ENCODE measurements at regions of chr1 and their contacts with region 1.

Region 1: DNA sequence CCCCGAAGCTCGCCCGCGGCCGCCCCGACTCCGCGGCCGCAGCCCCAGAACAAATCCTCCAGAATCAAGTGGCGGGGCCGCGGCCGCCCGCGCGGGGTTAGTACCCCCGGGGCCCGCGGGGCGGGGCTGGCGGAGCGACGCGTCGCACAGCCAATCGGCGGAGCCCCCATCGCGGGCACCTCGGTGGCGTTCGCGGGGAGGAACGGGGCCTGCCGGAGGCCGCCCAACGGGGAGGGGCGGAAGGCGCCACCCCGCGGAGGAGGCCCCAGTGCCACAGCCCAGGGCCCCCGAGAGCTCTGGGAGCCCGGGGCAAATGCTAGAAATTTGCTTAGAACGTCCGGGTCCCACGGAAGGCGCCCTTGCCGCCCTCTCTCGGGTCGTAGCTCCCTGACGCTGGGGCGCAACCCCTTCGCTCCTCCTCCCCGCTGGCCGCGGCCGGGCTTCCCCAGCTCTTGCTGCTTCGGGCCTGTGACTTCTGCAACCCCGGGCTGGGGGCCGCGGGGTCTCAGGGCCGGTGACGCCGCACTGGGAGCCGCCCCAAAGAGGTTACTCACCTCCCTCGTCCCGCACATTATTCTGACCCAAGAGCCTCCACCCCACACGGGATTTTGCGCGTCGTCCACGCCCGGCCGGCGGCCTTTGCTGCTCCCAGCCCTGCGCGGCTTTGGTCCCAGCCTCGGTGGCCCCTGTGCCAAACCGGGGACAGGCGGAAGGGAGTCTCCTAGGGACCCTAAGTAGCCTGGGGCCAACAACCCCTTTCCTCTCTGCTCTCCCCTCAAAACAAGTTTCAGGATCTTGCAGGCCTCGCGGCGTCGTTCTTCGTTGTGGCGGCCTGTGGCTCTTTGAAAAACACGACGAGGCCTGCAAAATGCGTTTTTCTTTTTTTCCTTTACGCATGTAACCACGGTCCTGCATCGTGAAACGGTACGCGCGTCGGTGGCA is at the start of gene RUNX3:
- DNase-seq: peak; percentile 62
- H3K4me3 Mint-ChIP-seq: peak within 1 kb of the TSS; percentile 41
- H3K27ac Mint-ChIP-seq: no peak within 1 kb of the TSS
- H3K4me1 Mint-ChIP-seq: no peaks in the 10 kb centered on the region
- H3K27me3 Mint-ChIP-seq: peaks cover 83% of the 10 kb centered on the region
- CTCF ChIP-seq: no peak
- total RNA-seq, gene RUNX3: 0.28 and 1.3 TPM in 2 replicates

Region 2: DNA sequence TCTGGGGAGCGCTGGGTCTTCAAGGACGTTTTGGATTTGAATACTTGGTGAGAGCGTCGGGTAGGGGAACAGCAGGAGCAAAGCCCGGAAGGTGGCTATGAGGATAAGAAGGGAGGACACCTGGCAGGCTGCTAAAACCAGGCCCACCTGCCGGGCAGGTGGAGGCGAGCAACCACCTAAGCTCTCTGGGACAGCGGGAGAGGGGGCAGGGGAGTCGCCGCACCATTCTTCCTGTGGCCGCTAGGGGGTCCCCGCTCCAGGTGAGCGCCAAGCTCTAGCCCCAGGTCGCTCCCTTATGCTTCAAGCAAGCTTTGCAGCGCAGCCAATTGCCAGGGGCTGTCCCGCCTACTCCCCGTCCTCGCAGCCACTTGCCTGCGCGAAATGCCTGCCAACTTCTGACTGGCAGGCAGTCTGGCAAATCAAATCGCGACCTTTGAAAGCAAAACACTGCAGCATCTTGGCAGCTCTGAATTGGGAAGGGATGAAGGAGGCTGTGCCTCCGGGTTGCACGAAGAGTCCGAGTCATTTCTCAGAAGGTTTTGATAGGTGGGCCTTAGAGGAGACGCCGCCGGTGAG is 515.1 kb before region 1 on chr1 and contains the start of gene NIPAL3:
- CTCF ChIA-PET with region 1: no interaction called
- intact Hi-C with region 1: no loop called
- DNase-seq: peak; percentile 96
- H3K4me3 Mint-ChIP-seq: peak within 1 kb of the TSS; percentile 98
- H3K27ac Mint-ChIP-seq: peak within 1 kb of the TSS; percentile 74
- H3K4me1 Mint-ChIP-seq: peaks cover 37% of the 10 kb centered on the region
- H3K27me3 Mint-ChIP-seq: no peaks in the 10 kb centered on the region
- CTCF ChIP-seq: peak; percentile 83
- total RNA-seq, gene NIPAL3: 28.8 and 30.8 TPM in 2 replicates

Region 3: GRCh38 chr1:24567792-24568388 is 362.6 kb before region 1 on chr1:
- CTCF ChIA-PET with region 1: no interaction called
- intact Hi-C with region 1: no loop called
- DNase-seq: peak; percentile 75
- H3K4me3 Mint-ChIP-seq: peak overlapping the region; percentile 24
- H3K27ac Mint-ChIP-seq: peak overlapping the region; percentile 74
- H3K4me1 Mint-ChIP-seq: peaks cover 56% of the 10 kb centered on the region
- H3K27me3 Mint-ChIP-seq: no peaks in the 10 kb centered on the region
- CTCF ChIP-seq: no peak

Region 4: GRCh38 chr1:24642481-24643361 is 287.8 kb before region 1 on chr1 and contains the start of gene SRRM1:
- CTCF ChIA-PET with region 1: no interaction called
- intact Hi-C with region 1: no loop called
- DNase-seq: peak; percentile 95
- H3K4me3 Mint-ChIP-seq: peak within 1 kb of the TSS; percentile 86
- H3K27ac Mint-ChIP-seq: peak within 1 kb of the TSS; percentile 96
- H3K4me1 Mint-ChIP-seq: peaks cover 31% of the 10 kb centered on the region
- H3K27me3 Mint-ChIP-seq: no peaks in the 10 kb centered on the region
- CTCF ChIP-seq: no peak
- total RNA-seq, gene SRRM1: 122 and 130 TPM in 2 replicates

Region 5: DNA sequence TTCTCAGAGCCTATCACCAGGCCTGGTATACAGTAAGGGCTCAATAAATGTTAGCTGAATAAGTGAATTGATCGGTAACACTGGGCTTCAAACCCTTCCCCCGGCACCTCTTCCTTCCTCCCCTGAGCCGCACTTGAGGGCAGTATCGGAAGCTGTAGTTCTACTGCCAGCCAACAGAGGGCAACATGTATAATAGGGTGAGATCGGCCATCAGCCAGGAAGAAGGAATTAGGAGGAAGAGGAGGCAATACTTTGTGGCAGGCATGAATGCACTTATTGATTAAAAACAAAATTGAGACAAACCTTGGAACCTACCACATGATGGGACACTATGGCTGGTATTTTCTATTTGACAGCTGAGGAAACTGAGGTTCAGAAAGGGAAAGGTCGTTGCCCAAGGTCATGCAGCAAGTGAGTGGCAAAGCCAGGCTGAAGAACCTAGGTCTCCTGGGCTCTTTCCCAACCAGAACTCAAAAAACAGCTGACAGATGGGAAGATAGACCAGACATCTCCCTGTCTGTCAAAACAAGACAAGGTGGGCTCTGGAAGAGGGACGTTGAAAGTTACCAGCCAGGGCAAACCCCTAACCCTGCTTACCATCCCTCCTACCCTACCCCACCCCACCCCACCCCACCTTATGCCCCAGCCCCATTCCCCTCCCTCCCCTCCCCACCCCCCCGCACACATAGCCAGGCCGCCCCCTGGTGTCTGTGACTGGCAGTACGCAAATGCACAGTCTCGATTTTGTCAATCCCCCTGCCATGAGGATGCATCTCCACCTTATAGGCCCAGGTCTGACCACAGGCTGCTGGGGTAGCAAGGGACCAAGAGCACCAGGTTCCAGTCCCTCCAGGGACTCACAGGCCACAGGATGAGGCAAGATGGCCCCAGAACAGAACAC is 106.9 kb after region 1 on chr1:
- CTCF ChIA-PET with region 1: interaction called, 3 read pairs
- intact Hi-C with region 1: loop called (anchors 5 kb)
- DNase-seq: peak; percentile 47
- H3K4me3 Mint-ChIP-seq: no peak overlapping the region
- H3K27ac Mint-ChIP-seq: no peak overlapping the region
- H3K4me1 Mint-ChIP-seq: peaks cover 8% of the 10 kb centered on the region
- H3K27me3 Mint-ChIP-seq: peaks cover 41% of the 10 kb centered on the region
- CTCF ChIP-seq: peak; percentile 36

Region 6: DNA sequence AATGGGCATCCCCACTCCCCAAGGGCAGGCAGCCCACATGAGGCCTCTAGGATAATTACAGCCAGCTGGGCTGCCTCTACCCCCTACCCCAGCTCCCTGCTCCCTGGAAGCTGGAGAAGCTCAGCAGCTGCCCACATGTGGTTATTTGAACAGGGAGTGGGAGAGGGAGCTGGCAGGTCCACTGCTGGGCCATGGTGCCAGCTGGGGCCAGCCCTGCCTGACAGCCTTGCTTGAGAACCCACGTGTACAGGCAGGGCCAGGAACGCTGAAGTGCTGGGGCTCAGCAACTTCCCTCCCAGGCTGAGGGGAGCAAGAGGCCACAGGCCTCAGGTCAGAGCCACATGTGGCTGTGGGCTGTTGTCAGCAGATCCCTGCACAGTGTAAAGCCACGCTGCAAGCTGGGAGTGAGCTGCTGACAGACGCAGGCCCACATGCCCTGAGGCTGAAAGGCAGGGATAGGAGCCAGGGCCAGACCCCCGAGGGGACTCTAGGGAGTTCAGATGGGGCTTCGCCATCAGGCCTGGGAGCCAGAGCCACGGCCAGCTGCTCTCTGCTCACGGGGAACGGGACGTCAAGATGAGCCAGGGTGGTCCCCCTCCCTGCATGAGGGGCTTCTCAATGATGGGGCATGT is 172.8 kb after region 1 on chr1:
- CTCF ChIA-PET with region 1: interaction called, 3 read pairs
- intact Hi-C with region 1: loop called (anchors 5 kb)
- DNase-seq: no peak
- H3K4me3 Mint-ChIP-seq: no peak overlapping the region
- H3K27ac Mint-ChIP-seq: no peak overlapping the region
- H3K4me1 Mint-ChIP-seq: peaks cover 8% of the 10 kb centered on the region
- H3K27me3 Mint-ChIP-seq: peaks cover 78% of the 10 kb centered on the region
- CTCF ChIP-seq: no peak

Measured in Calu3 (cell line).